ENCODE measurements at regions of chr11 and their contacts with region 1.

Region 1: GRCh38 chr11:59171508-59172322 is at the start of gene DTX4:
- DNase-seq: peak; percentile 92
- H3K4me3 Mint-ChIP-seq: peak within 1 kb of the TSS; percentile 78
- H3K27ac Mint-ChIP-seq: peak within 1 kb of the TSS; percentile 31
- H3K4me1 Mint-ChIP-seq: peaks cover 7% of the 10 kb centered on the region
- H3K27me3 Mint-ChIP-seq: peaks cover 32% of the 10 kb centered on the region
- total RNA-seq, gene DTX4: 0.62 to 0.69 TPM

Region 2: DNA sequence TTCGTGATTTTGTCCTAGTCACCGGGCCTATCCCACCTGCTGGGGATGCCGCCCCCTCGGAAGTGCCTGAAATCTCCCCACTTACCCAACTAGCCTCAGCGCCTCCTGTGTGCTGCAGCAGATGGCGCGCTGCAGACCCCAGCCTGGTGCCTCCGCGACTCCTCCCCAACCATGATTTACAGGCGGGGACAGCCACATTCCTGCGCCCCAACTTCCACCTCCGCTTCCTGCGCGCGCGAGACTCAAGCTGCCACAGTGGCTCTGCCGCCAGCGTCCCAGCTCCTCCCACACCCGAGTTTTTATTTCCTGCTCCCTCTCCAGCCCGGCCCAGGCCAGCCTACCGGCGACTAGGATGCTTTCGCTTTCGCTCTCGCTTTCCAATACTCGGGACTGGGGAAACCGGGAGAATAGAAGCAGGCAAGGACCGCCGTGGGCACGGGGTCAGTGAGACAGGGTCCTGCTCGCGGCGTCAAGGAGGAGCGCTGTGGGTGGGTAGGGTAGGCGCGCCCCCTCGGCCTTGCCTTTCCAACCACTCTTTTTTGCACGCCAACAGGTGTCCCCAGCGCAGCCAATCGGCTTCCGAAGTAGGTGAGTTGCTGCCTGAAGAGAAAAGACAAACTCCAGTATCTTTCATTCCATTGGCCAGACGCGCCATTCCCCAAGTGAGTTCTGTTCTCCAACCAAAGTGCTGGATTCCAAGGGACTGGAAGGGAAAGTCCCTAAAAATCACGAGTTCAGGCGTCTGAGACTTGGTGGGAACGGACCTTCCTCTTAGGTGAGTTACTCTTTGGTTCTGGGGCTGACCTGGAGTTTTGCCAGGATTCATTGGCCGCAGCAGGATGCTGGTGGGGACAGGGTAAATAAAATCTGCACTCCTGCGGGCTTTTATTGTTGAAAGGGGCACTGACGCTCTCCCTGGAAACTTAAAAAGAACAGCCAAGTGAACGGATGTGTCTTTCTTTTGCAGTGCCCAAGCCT is 28.9 kb before region 1 on chr11 and contains the start of gene FAM111A:
- CTCF ChIA-PET with region 1: interaction called, 16 read pairs
- POLR2A ChIA-PET with region 1: no interaction called
- DNase-seq: peak; percentile 94
- H3K4me3 Mint-ChIP-seq: peak within 1 kb of the TSS; percentile 89
- H3K27ac Mint-ChIP-seq: peak within 1 kb of the TSS; percentile 96
- H3K4me1 Mint-ChIP-seq: peaks cover 52% of the 10 kb centered on the region
- H3K27me3 Mint-ChIP-seq: no peaks in the 10 kb centered on the region
- total RNA-seq, gene FAM111A: 208 to 258 TPM

Region 3: GRCh38 chr11:59158206-59159068 is 13.3 kb before region 1 on chr11:
- CTCF ChIA-PET with region 1: interaction called, 34 read pairs
- POLR2A ChIA-PET with region 1: interaction called, 3 read pairs
- DNase-seq: peak; percentile 75
- H3K4me3 Mint-ChIP-seq: no peak overlapping the region
- H3K27ac Mint-ChIP-seq: peak overlapping the region; percentile 9
- H3K4me1 Mint-ChIP-seq: peaks cover 14% of the 10 kb centered on the region
- H3K27me3 Mint-ChIP-seq: peaks cover 7% of the 10 kb centered on the region

Region 4: DNA sequence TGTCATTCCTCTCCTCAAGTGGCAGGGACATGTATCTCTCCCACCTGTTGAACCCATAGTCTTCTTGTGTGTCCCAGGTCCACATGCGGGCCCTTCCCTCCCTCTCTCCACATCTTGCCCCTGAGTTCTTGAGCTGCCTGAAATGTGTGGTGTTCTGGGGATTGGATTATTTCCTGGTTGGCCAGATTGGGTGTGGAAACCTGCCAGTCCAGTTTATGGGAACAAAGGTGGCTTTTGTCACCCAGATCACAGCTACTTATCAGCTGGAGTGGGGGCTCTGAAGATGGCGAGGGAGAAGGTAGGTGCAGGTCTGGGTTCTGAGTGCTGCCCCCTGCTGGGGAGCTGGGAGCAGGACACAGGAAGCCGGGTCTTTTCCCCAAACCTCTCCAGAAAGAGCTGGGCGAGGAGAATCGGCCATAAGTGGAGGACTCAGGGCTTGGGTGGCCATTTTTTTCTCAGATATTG is 14.4 kb after region 1 on chr11:
- CTCF ChIA-PET with region 1: interaction called, 41 read pairs
- POLR2A ChIA-PET with region 1: interaction called, 4 read pairs
- DNase-seq: peak; percentile 37
- H3K4me3 Mint-ChIP-seq: no peak overlapping the region
- H3K27ac Mint-ChIP-seq: no peak overlapping the region
- H3K4me1 Mint-ChIP-seq: no peaks in the 10 kb centered on the region
- H3K27me3 Mint-ChIP-seq: no peaks in the 10 kb centered on the region

Region 5: DNA sequence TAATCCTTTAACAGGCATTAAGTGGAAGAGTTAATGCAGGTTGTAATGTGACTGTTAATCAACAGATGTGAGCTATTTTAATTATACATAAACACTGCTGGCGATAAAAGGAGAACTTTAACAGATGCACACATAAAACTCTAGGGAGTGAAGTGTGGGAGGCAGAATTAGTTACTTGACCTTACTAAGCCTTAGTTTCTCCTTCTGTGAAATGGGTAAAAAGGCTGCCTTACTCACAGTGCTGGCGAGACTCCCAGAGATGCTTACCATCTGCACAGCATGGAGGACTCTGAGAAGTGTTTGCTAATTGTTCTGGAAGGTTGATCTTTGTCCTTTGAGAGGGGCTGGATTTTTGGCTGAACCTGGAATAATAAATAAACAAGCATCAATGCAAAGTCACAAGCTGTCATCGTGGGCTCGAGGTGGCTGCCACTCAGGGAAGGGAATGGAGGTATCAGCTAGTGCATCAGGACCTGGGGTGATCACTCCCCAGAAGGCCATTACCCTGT is 99.6 kb after region 1 on chr11:
- CTCF ChIA-PET with region 1: no interaction called
- POLR2A ChIA-PET with region 1: no interaction called
- DNase-seq: no peak
- H3K4me3 Mint-ChIP-seq: no peak overlapping the region
- H3K27ac Mint-ChIP-seq: no peak overlapping the region
- H3K4me1 Mint-ChIP-seq: peaks cover 40% of the 10 kb centered on the region
- H3K27me3 Mint-ChIP-seq: no peaks in the 10 kb centered on the region

Measured in activated CD4-positive, alpha-beta T cell treated with anti-CD3 and anti-CD28 coated beads, Interleukin-2, amount 10 ng/mL, durations not matched to agents 7 days and 5 days (primary cell).